ENCODE measurements at regions of chr4 and their contacts with region 1.

Region 1: DNA sequence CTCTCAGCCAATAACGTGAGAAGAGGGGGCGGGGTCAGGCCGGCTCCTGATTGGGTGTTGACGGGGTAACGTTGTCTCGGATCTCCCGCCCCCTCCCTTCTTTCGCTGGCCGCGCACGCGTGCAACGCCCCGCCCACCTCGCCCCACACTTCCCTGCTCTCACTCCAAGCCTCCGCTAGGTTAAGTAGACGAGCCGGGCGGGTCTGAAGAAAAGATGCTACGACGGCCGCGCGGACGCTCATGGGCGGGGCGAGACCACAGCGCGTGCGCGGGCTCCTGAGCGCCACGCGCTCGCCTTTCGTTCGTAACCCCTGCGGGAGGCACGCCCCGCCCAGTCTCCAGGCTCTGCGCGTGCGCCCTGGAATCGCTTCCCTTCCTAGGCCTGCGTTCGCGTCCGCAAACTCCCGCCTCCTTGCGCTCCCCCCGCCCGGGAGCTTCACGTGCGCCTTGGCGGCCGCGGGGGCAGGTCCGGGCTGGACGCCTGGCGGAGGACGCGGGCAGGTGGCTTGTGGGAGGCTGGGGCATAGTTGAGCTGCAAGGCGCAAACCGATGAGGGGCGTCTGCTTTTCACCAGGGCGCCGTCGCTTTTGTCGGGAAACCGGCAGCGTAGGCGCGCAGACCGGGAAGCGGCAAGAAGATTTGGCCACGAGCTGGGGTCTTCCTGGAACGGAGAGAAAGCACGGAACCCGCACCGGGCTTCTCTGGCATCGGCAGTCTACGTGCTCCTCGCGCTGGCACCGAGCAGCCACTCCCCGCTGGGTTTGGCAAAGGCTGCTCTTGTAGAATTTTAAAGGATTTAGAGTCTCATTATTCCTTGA is 467 bp upstream of the PGRMC2 start:
- DNase-seq: peak; percentile 96
- H3K4me3 Mint-ChIP-seq: peak overlapping the region; percentile 96
- H3K27ac Mint-ChIP-seq: peak overlapping the region; percentile 93
- H3K4me1 Mint-ChIP-seq: peaks cover 31% of the 10 kb centered on the region
- H3K27me3 Mint-ChIP-seq: no peaks in the 10 kb centered on the region

Region 2: DNA sequence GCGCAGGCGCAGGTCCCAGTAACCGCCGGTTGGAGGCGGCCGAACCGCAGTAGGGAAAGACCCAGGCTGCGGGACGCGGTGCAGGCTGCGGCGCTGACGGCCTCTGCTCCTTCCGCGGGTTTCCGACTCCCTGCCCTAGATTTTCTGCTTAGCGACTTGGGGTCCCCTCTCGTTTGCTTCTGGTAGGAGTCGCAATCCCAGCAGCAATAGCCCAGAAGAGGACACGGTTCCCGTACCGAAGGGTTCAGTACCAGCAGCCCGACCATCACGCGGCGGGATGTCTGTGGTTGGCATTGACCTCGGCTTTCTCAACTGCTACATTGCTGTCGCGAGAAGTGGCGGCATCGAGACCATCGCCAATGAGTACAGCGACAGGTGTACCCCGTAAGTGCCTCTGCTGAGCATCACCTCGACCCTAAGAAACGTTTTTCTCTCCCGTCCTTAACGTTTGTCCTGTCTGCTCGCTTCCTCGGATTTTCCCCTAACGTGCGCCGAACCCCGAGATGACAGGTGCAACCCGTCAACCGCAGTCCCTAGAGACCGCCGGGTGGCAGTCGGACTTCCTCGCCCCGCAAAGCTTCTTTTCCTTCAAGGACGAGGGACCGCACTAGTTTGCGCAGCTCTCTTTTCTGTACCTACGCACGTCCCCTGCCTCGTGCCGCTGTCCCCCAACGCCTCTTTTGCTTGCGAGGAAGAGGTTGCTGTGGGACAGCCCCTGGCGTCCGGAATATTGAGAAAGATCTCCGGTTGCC is 505.6 kb before region 1 on chr4 and contains the start of gene HSPA4L:
- intact Hi-C with region 1: loop called (anchors 5 kb)
- DNase-seq: peak; percentile 64
- H3K4me3 Mint-ChIP-seq: peak within 1 kb of the TSS; percentile 91
- H3K27ac Mint-ChIP-seq: peak within 1 kb of the TSS; percentile 97
- H3K4me1 Mint-ChIP-seq: peaks cover 32% of the 10 kb centered on the region
- H3K27me3 Mint-ChIP-seq: peaks cover 65% of the 10 kb centered on the region
- total RNA-seq, gene HSPA4L: 2.5 and 3.8 TPM in 2 replicates

Region 3: DNA sequence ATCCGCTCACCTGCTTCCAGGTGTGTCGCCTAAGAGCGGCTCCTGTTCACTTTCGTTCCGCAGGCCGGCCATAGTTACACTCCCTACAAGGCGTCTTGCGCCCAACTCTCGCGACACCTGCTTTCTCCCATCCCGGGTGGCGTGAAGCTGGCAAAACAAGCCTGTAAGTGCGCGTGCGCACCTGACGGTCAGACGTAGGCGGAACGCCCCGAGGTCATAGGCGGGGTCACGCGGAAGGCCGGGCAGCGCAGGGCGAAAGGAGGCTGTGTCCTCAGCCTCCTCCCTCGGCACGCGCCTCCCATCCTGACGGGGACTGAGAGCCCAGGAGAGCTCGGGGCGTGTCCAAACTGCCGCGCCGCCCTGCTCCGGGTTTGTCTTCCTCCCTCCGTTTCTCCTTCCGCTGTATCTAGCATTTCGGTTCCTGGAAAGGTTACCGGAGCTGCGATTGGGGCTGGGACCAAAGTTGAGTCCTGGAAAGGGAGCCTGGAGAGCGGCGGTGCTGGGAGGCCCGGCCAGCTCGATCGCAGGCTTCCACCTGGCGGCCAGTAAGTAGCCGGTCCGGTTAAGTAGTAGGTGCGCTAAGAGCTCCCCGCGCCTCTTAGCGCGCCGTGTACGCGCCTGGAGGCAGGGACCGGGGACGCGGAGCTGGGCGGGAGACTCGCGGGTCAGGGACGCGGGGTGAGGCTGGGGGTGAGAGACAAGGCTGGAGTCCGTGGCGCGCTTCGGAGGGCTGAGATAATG is 322.8 kb before region 1 on chr4 and contains the starts of genes ABHD18 and MFSD8:
- intact Hi-C with region 1: loop called (anchors 1 kb)
- DNase-seq: peak; percentile 100
- H3K4me3 Mint-ChIP-seq: peak within 1 kb of the TSS; percentile 90
- H3K27ac Mint-ChIP-seq: peak within 1 kb of the TSS; percentile 96
- H3K4me1 Mint-ChIP-seq: peaks cover 42% of the 10 kb centered on the region
- H3K27me3 Mint-ChIP-seq: no peaks in the 10 kb centered on the region
- total RNA-seq, gene ABHD18: 18.3 and 18.5 TPM in 2 replicates
- total RNA-seq, gene MFSD8: 18.7 and 21.1 TPM in 2 replicates

Region 4: DNA sequence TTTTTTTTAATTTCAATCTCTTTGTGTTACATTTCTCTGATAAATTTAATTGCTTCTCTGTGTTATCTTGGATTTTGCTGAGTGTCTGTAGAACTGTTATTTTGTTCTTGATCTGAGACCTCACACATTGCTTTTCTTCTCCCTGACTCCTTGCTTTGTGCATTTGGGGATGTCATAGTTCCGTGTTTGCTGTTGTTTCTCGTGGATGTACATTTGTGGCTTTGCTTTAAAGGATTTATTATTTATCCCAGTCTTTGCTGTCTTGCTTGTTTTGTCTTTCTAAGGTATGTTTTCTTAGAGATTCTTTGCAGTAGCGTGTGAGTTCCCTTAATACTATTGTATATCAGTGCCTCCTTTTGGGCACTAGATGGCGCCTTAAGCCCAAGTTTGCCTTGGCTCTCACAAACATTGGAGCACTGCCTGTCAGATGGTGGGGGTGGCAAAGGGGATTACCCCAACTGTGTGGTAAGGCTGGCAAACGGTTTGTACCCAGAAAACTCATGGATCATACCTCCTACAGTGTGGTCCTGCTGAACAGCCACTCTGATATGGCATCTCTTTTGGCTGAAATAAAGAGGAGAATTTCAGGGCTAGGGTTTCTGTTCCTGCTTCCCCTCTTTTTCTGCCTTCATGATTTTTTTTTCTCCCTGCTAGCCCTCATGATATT is 96.8 kb before region 1 on chr4:
- intact Hi-C with region 1: loop called (anchors 1 kb)
- DNase-seq: peak; percentile 56
- H3K4me3 Mint-ChIP-seq: no peak overlapping the region
- H3K27ac Mint-ChIP-seq: no peak overlapping the region
- H3K4me1 Mint-ChIP-seq: peaks cover 16% of the 10 kb centered on the region
- H3K27me3 Mint-ChIP-seq: no peaks in the 10 kb centered on the region

Region 5: DNA sequence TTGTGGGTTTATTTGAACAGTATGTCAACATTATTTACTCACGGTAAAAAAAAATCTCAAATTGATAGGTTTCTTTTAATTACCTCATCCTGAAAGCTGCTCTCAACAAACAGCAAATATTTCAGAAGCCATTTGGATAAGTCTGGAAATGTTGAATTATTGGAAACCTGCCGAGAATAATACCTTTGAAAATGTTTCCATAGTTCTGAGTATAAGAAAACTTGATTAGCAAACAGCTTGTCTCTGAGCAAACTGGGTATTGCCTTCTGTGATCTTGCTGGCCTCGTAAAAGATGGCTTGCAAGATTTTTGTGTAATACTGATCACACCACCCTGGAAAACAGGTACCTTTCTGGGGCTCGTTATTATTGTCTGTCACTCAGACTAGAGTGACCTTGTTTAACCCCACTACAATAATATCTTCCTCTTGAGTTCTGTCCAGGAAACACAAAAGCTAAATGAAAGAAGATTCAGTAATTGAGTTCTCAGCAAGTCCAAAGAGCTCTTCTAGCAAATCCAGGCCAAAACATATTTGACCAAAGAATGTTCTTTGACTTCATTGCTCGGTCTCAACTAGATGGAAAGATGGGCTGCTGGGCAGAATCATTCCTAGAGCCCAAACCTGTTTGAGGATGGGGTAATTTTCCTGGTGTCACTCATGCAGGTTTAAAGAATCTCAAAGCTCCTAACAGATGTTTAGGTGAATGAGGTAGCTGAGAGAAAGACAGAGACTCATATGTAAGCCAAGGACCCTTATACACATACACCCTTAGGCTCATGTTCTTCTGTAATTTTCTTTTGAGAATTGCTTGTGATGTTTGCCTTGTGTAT is 265.8 kb after region 1 on chr4:
- intact Hi-C with region 1: loop called (anchors 5 kb)
- DNase-seq: no peak
- H3K4me3 Mint-ChIP-seq: peak overlapping the region; percentile 88
- H3K27ac Mint-ChIP-seq: no peak overlapping the region
- H3K4me1 Mint-ChIP-seq: peaks cover 13% of the 10 kb centered on the region
- H3K27me3 Mint-ChIP-seq: peaks cover 7% of the 10 kb centered on the region

Region 6: GRCh38 chr4:128847082-128847724 is 559.1 kb after region 1 on chr4:
- intact Hi-C with region 1: no loop called
- DNase-seq: no peak
- H3K4me3 Mint-ChIP-seq: no peak overlapping the region
- H3K27ac Mint-ChIP-seq: peak overlapping the region; percentile 41
- H3K4me1 Mint-ChIP-seq: peaks cover 10% of the 10 kb centered on the region
- H3K27me3 Mint-ChIP-seq: no peaks in the 10 kb centered on the region

Region 7: DNA sequence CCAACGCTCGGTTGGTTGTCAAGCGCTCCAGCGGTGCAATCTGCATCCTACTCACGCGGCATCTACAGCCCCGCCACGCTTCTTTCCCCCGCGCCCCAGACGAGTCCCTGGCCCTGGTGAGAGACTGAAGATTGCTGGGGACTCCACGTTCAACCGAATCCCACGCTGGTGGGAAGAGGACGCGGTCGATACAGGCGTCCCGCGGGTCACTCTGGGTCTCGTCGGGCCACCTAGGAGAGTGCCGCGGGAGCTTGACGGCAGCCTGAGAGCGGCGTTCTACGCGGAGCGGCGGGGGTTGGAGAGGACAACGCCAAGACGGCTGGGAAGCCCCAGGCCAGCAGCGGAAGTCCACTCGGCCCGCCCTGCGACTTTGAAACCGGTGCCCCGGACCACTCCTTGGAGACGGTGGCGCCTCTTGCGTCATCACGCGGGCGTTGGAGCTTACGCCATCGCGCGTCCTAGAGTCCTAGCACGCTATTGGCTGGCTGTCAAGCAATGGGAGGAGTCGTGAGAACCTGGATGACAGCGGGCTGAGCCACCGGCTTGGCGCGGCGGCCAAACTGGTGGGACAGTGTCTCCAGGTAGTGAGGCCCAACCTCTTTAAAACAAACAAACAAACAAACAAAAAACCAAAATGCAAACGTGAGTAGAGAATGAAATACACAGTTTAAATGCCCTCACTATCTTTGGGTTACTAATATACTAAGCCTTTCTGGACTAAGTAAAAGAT is 805.3 kb after region 1 on chr4 and contains the start of gene SCLT1:
- intact Hi-C with region 1: loop called (anchors 1 kb)
- DNase-seq: peak; percentile 96
- H3K4me3 Mint-ChIP-seq: peak within 1 kb of the TSS; percentile 66
- H3K27ac Mint-ChIP-seq: peak within 1 kb of the TSS; percentile 42
- H3K4me1 Mint-ChIP-seq: peaks cover 56% of the 10 kb centered on the region
- H3K27me3 Mint-ChIP-seq: no peaks in the 10 kb centered on the region
- total RNA-seq, gene SCLT1: 24.3 and 24.4 TPM in 2 replicates